Lower lobe of right lung (tissue), 2 donors: ENCODE measurements at regions of chr7 and their contacts with region 1.

Region 1: DNA sequence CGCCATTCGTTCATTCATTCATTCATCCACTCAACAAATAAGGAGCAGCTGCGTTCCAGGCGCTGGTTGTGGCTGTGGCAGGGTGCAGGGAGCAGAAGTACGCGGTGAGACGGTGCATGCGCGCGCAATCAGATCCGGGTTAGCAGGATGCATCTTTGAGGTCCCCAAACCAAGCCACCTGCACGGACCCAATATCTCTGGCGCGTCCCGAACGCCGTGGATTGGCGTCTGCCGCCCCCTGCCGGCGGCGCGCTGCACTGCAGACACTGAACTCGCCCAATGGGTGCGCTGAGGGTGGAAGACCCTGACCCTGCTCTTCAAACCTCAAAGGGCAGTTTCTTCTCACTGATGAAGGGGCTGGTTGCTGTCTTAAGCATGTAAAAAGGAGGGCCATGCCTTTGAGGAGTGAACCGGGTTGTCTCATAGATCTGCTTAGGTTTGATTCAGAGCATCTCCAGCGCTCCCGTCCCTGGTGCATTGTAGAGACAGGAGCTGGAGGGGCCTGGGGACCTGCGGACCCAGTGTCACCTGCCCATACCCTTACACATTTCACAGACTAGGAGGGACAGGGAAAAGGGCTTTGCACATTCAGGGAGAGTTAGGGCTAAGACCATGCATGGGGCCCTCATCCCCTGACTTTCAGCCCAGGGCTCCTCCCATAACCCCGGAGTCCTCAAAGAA is 102.5 kb downstream of the RAMP3 start:
- DNase-seq: peak; percentile 77
- ATAC-seq: peak; percentile 85 to 89
- H3K4me3 ChIP-seq: no peak overlapping the region
- H3K27ac ChIP-seq: no peak overlapping the region
- H3K4me1 ChIP-seq: no peaks in the 10 kb centered on the region
- H3K27me3 ChIP-seq: peaks cover 7% of the 10 kb centered on the region
- CTCF ChIP-seq: peak; percentile 99

Region 2: GRCh38 chr7:45153233-45153632 is 106.9 kb before region 1 on chr7:
- intact Hi-C with region 1: loop called (anchors 5 kb)
- DNase-seq: no peak
- ATAC-seq: no peak
- H3K4me3 ChIP-seq: no peak overlapping the region
- H3K27ac ChIP-seq: no peak overlapping the region
- H3K4me1 ChIP-seq: no peaks in the 10 kb centered on the region
- H3K27me3 ChIP-seq: peaks cover 20% of the 10 kb centered on the region
- CTCF ChIP-seq: no peak